ENCODE measurements at regions of chr14 and their contacts with region 1.

Region 1: GRCh38 chr14:32576088-32576795 is 247.1 kb downstream of the AKAP6 start:
- DNase-seq: peak; percentile 10 to 35
- ATAC-seq: peak; percentile 76 to 89
- H3K4me3 ChIP-seq: no peak overlapping the region
- H3K27ac ChIP-seq: no peak overlapping the region
- H3K4me1 ChIP-seq: peaks cover 3 to 36% of the 10 kb centered on the region in 2 donors
- H3K27me3 ChIP-seq: no peaks in the 10 kb centered on the region
- CTCF ChIP-seq: peak; percentile 83 to 96 (median 88)
- POLR2A ChIP-seq: no peak

Region 2: DNA sequence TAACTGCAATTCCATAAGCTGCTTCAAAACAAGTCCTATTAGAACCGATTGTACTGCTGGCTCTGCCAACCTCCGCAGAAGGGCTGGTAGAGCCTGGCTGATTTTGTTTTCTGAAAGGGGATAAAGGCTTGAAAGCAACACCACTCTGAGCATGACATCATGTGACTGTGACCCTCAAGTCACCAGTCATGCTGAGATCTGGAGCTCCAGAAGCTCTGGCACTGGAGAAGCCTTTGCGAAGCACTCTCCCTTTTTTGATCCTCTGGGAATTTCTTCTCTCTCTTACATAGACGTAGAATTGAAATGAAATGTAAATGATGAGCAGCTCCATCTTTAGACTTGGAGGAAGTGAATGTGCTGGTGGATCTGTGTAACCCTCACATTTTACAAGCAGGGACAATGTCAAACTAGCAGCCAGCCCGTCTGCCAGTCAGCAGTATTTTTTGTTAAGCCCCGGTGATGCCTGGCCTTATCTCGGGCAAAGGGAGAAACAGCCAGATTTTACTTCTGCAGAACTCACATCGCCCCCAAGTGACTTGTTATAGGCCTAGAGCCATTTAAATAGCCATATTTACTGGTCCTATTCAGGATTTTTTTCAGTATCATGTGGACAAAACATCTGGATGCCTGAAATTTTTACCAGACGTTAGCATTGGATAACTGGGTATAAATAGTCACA is 250.3 kb after region 1 on chr14:
- in situ Hi-C with region 1: no loop called
- intact Hi-C with region 1: loop called (anchors 10 kb)
- DNase-seq: no peak
- ATAC-seq: no peak
- H3K4me3 ChIP-seq: no peak overlapping the region
- H3K27ac ChIP-seq: no peak overlapping the region
- H3K4me1 ChIP-seq: peaks cover 32 to 33% of the 10 kb centered on the region in 2 donors
- H3K27me3 ChIP-seq: no peaks in the 10 kb centered on the region
- CTCF ChIP-seq: no peak
- POLR2A ChIP-seq: no peak

Region 3: DNA sequence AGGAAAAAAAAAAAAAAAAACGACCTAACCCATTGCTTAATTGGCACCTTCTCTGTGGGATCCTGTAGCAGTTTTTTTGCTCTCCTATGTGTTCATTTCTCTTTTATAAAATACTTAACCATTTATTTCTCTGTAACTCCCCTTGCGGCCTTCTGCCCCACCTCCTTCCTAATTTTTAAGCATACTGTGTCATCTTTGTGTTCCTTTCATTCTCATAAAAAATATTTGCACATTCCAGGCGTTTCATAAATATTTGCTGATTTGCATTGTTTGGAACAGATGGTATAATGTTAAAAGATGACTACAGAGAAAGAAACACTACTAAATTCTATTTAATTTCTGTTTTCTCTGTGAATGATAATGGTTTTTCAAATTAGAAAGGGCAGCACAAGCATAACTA is 440.4 kb after region 1 on chr14:
- in situ Hi-C with region 1: loop called in 1 of 4 experiments (anchors 25 kb)
- intact Hi-C with region 1: no loop called
- DNase-seq: no peak
- ATAC-seq: no peak
- H3K4me3 ChIP-seq: no peak overlapping the region
- H3K27ac ChIP-seq: no peak overlapping the region
- H3K4me1 ChIP-seq: no peaks in the 10 kb centered on the region
- H3K27me3 ChIP-seq: no peaks in the 10 kb centered on the region
- CTCF ChIP-seq: no peak
- POLR2A ChIP-seq: no peak

Region 4: DNA sequence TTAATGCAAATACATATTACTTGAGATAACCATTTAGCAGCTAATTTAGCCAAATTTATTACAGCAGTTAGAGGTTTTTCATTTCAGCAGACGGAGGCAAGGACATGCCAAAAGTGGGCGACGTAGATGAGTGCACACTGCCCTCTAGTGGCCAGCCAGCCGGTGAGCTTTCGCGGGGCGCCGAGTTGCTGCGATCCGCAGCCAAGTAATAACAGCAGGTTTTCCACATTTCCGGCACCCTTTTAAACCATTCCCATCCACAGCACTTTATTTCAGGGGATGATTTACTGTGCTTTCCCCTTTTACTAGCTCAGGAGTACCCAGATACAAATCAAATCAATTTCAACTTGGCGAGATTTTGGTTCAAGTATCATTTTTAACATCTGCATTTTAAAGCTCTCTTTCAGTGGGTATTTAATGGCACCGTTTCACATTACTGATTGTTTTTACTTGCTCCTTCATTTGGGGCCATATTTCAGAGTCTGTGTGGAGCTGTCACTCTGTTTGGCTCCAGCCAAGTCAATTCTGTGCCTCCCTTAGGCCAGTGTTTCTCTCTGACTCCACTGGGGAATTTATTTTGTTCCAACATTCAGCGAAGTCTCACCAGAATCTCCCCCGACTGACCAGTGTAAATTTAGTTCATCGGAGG is 1216.6 kb after region 1 on chr14:
- in situ Hi-C with region 1: loop called (anchors 5 to 10 kb)
- intact Hi-C with region 1: loop called (anchors 1 kb)
- DNase-seq: peak; percentile 41 to 50
- ATAC-seq: peak; percentile 76 to 89
- H3K4me3 ChIP-seq: peak overlapping the region; percentile 34 to 60 (median 40)
- H3K27ac ChIP-seq: no peak overlapping the region
- H3K4me1 ChIP-seq: peaks cover 4 to 6% of the 10 kb centered on the region in 2 donors
- H3K27me3 ChIP-seq: no peaks in the 10 kb centered on the region
- CTCF ChIP-seq: peak; percentile 71 to 96 (median 78)
- POLR2A ChIP-seq: no peak

Measured in gastrocnemius medialis (tissue), 4 donors.